ENCODE measurements at regions of chr17 and their contacts with region 1.

Region 1: DNA sequence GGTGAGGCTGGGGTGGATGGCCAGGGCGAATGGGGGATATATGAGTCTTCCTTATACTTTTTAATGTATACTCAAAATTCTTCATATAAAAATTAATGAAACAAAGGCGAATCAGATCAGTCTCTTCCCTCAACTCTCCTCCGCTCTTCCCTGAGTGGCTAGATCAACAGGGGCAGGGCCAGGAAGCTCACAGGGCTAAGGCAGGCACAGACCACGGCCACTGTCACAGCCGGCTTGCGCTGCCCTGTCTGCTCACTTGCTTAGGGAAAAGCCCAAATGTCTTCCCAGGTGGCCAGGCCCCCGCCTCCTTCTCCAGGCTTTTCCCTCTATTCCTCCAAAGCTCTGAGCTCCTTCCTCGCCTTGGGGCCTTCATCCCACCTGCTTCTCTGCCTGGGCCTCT is 6.0 kb downstream of the GRIN2C start:
- DNase-seq: no peak
- H3K4me3 ChIP-seq: no peak overlapping the region
- H3K27me3 ChIP-seq: peaks cover 48% of the 10 kb centered on the region
- CTCF ChIP-seq: no peak

Region 2: GRCh38 chr17:74873038-74873873 is 19.6 kb after region 1 on chr17:
- CTCF ChIA-PET with region 1: interaction called, 3 read pairs
- POLR2A ChIA-PET with region 1: interaction called, 20 read pairs
- DNase-seq: peak; percentile 99
- H3K4me3 ChIP-seq: peak overlapping the region; percentile 83
- H3K27me3 ChIP-seq: peaks cover 3% of the 10 kb centered on the region
- CTCF ChIP-seq: no peak